Tibial artery (tissue), 4 donors: ENCODE measurements at regions of chr22 and their contacts with region 1.

Region 1: GRCh38 chr22:27686534-27686933 is 115.0 kb downstream of the MN1 start:
- DNase-seq: peak; percentile 86 to 97
- H3K4me3 ChIP-seq: no peak overlapping the region
- H3K27ac ChIP-seq: peak overlapping the region; percentile 78 to 89
- H3K4me1 ChIP-seq: peaks cover 8 to 47% (median 22%) of the 10 kb centered on the region in 4 donors
- H3K27me3 ChIP-seq: no peaks in the 10 kb centered on the region
- CTCF ChIP-seq: no peak

Region 2: GRCh38 chr22:27327981-27328721 is 358.4 kb before region 1 on chr22:
- intact Hi-C with region 1: no loop called
- DNase-seq: no peak
- H3K4me3 ChIP-seq: no peak overlapping the region
- H3K27ac ChIP-seq: no peak overlapping the region
- H3K4me1 ChIP-seq: peaks cover 0 to 11% (median 2%) of the 10 kb centered on the region in 4 donors
- H3K27me3 ChIP-seq: peaks cover 0 to 17% of the 10 kb centered on the region in 2 donors
- CTCF ChIP-seq: no peak

Region 3: GRCh38 chr22:27632451-27633295 is 53.9 kb before region 1 on chr22:
- intact Hi-C with region 1: loop called (anchors 10 kb)
- DNase-seq: no peak
- H3K4me3 ChIP-seq: no peak overlapping the region
- H3K27ac ChIP-seq: no peak overlapping the region
- H3K4me1 ChIP-seq: peaks cover 0 to 20% (median 15%) of the 10 kb centered on the region in 4 donors
- H3K27me3 ChIP-seq: no peaks in the 10 kb centered on the region
- CTCF ChIP-seq: no peak

Region 4: DNA sequence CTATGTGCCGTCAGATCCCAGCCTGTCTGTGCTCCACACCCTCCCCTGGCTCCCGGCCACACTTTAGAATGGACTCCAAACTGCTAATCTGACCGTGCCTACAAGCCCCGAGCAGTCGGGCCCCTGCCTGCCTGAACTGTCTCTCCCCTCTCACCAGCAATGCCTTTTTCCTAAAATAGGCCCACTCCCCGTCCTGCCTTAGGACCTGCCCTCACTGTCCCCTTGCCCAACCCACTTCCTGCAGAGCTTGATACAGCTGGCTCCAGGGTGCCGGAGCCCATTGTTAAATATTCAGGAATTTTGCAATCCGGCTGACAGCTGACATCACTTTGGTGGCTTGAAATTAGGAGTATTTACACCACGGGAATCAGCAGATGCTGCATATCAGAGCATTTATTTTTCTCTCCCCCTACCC is 93.6 kb after region 1 on chr22:
- intact Hi-C with region 1: loop called (anchors 10 kb)
- DNase-seq: peak; percentile 64 to 83
- H3K4me3 ChIP-seq: no peak overlapping the region
- H3K27ac ChIP-seq: peak overlapping the region; percentile 92 to 94
- H3K4me1 ChIP-seq: peaks cover 5 to 100% (median 74%) of the 10 kb centered on the region in 4 donors
- H3K27me3 ChIP-seq: no peaks in the 10 kb centered on the region
- CTCF ChIP-seq: no peak

Region 5: GRCh38 chr22:27825174-27825573 is 138.6 kb after region 1 on chr22:
- intact Hi-C with region 1: no loop called
- DNase-seq: no peak
- H3K4me3 ChIP-seq: no peak overlapping the region
- H3K27ac ChIP-seq: no peak overlapping the region
- H3K4me1 ChIP-seq: peaks cover 0 to 30% (median 14%) of the 10 kb centered on the region in 4 donors
- H3K27me3 ChIP-seq: no peaks in the 10 kb centered on the region
- CTCF ChIP-seq: no peak